Sciatic nerve (tissue), 2 donors: ENCODE measurements at regions of chr3 and their contacts with region 1.

Region 1: DNA sequence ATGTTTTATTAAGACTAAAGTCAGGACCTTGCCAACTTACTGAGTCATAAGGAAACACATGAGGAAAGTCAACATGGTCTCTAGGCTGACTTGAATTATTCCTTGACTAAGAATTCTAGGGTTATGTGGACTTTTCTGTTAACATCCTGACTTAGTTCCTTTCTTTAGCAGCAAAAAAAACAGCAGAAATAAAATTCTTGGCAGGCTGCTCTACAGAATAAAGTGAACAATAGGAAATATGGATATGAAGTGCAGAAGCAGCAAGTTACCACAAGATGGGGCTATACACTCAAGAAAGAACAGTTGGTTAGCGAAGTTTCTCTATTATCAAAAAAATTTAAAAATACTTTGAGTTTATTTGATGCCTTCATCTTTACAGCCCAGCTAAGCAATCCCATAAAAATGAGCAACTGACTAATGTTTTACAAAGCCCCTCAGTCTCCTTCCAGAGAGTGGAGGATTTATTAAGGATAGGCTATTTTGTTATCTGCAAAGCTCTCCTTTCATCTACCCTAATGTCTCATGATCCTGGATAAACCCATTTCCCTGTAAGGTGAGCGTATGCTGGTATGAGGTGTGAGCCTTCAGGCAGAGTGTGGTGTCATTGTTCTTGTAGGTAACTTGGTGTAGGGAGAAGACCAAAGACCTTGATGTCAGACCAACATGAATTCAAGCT is 23.1 kb upstream of the MCCC1 start:
- DNase-seq: no peak
- ATAC-seq: peak; percentile 76

Region 2: GRCh38 chr3:182241766-182242488 is 880.5 kb before region 1 on chr3:
- intact Hi-C with region 1: no loop called
- DNase-seq: no peak
- ATAC-seq: peak; percentile 97

Region 3: DNA sequence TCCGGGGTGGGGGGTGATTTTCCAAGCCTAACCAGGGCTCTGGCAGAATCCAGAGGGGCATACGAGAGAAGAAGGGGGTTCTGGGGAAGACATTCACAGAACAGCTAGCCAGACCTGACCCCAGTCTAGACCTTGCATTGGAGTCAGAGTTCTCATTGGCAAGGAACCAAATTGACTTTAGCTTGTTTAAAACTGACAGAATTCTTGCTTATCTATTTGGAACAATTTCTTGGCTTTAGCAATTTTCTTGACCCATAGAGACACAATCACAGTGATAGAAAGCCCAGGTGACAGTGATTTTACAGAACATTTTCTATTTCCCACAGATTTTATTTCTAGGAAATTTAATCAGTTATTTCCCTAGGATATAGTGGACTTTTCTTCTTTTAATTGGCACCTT is 352.7 kb before region 1 on chr3:
- intact Hi-C with region 1: no loop called
- DNase-seq: no peak
- ATAC-seq: no peak

Region 4: GRCh38 chr3:182967218-182968204 is 154.9 kb before region 1 on chr3:
- intact Hi-C with region 1: no loop called
- DNase-seq: no peak
- ATAC-seq: no peak

Region 5: DNA sequence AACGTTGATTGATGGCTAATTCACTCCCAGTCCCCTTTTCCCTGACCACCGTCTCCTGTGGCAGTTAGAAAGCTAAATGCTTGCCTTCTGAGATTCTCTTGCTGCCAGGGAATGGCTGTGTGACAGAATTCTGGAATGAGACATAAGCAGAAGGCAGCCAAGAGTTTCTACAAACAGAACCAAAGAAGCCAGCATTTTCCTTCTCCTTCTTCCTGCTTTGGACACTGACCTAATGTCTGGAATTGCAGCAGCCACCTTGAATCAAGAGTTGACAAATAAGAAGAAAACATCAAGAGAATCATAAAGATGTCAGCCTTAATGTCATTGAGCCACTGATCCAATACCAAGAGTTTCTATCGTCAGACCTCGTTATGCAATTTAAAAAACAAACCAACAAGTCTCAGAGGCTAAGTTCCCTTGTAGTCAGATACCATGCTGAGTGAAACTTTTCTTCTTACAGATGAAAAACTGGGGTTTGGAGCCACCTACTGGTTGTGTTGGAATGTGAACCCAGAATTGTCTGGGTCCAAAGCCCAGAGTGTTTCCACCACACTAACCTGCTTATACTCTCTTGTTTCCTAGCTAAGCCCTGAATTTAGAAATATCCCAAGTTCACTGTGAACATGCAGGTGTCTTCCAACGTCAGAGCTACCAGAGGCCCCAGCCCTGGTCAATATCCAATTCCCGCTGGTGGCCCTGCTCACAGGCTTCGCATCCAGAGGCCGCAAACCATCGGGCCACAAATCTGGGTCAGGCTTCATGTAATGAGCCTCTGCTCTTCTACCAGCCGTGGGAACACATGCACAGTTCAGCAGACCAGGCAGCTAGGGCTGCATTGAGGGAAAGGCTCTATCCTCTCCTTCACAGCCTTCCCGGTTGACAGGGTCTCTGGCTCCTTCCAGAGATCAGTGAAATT is 263.6 kb after region 1 on chr3:
- intact Hi-C with region 1: loop called (anchors 10 kb)
- DNase-seq: no peak
- ATAC-seq: peak; percentile 84

Region 6: DNA sequence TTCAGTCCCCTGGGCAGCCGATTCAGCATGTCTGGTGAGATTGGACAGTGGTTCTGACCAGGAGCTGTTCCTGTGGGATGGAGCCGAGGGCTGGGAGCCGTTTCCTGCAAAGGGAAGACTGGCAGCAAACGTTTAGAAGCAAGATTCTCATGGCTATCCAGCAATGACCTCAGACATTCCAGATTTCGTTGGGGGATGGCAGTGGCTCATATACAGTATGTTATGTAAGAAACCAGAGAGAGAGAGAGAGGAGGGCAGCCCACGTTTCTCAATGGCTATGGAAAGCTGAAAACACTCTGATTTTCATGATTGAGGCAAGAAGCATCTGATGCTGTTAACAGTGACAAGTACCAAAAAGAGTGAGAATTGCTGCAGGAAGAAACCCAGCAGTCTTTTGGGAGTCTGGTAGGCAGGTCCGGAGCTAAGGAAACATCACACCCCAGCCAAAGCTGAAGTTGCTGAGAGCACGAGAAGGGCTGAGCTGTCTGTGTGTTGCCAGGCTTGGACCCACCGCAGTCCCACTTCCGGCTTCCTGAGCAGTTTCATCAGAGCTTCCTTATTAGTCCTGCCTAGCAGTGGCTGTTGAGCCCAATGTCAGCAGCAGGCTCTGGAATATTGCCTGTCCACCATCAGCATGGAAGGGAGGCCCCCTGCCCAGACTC is 1664.0 kb after region 1 on chr3:
- intact Hi-C with region 1: no loop called
- DNase-seq: peak; percentile 72
- ATAC-seq: peak; percentile 91